ENCODE measurements at regions of chr17 and their contacts with region 1.

Region 1: DNA sequence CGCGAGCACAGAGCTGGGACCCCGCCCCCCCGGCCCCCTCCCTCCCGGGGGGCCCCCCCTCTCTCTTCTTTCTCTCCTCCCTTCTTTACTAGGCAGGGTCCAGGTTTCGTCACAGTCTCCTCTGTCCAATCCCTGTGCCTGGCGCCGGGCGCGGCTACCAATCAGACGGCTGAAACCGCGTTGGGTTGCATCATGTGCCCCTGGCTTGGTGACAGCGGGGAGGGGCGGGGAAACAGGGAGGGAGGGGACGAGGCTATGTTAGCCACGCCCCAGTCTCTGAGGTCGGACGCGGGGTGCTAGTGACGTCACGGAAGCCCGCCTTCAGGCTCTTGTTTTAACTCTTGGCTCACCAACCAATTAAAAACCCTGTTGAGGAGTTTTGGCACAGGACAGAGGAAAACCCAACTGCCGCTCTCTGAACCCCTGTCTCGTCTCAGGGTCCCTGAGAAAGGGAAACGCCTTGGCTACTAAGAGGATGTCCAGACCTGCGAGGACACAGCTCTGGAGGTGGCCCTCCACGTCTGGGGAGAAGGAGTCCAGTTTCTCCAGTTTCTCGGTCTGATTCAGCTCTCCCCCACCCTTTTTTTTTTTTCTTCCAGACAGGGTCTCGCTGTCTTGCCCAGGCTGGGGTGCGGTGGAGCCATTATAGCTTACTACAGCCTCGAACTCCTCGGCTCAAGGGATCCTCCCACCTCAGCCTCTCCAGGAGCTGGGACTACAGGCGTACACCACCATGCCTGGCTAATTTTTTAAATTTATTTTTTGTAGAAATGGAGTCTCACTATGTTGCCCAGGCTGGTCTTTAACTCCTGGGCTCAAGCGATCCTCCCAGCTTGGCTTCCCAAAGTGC is 439 bp upstream of the PLEKHH3 start:
- DNase-seq: peak; percentile 100
- ATAC-seq: peak; percentile 65 to 71 (median 68)
- H3K4me3 ChIP-seq: peak overlapping the region; percentile 96
- H3K27ac ChIP-seq: peak overlapping the region; percentile 81
- H3K4me1 ChIP-seq: peaks cover 53% of the 10 kb centered on the region
- H3K27me3 ChIP-seq: no peaks in the 10 kb centered on the region
- CTCF ChIP-seq: no peak

Region 2: DNA sequence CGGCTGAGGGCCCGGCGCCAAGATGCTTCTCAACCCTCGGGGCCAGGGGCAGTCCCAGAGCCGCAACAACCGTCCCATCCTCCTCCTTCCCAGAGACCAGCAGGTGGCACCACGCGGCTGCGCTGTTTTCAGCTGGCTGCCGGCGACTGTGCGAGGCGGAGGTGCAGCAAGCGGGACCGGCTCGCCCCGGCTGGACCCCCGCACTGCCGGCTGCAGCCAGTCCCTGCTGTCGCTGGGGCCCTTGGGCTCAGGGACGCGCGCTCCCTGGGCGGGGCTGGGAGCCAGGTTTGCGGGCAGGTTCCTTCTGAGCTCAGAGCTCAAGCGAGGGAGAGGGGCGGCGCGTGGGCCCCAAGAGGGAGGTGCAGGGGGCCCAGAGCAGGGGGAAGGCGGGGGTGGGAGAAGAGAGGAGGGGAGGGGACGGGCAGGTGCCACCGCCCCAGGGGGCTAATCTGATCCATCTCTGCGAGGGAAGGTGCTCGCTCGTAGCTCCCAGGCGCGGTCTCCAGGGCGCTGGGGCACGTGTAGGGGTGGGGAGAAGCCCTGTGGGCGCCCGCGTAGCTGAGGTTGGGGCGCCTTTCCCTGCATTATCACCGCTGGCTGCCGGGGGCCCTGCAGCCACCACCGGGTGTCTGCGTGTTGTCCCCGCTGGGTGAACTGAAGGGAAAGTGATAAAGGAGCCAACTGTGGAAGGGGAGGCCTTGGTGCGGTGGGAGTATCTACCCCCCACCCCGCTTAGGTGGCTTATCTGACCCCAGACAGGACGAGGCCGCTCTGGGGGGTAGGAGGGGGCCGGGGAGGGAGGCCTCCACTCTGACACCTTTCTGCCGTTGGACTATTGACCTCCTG is 364.7 kb before region 1 on chr17:
- intact Hi-C with region 1: loop called in 1 of 2 experiments (anchors 10 kb)
- DNase-seq: peak; percentile 89 to 94
- ATAC-seq: peak; percentile 80 to 90 (median 86)
- H3K4me3 ChIP-seq: peak overlapping the region; percentile 51
- H3K27ac ChIP-seq: peak overlapping the region; percentile 88
- H3K4me1 ChIP-seq: peaks cover 21% of the 10 kb centered on the region
- H3K27me3 ChIP-seq: no peaks in the 10 kb centered on the region
- CTCF ChIP-seq: peak; percentile 62

Region 3: DNA sequence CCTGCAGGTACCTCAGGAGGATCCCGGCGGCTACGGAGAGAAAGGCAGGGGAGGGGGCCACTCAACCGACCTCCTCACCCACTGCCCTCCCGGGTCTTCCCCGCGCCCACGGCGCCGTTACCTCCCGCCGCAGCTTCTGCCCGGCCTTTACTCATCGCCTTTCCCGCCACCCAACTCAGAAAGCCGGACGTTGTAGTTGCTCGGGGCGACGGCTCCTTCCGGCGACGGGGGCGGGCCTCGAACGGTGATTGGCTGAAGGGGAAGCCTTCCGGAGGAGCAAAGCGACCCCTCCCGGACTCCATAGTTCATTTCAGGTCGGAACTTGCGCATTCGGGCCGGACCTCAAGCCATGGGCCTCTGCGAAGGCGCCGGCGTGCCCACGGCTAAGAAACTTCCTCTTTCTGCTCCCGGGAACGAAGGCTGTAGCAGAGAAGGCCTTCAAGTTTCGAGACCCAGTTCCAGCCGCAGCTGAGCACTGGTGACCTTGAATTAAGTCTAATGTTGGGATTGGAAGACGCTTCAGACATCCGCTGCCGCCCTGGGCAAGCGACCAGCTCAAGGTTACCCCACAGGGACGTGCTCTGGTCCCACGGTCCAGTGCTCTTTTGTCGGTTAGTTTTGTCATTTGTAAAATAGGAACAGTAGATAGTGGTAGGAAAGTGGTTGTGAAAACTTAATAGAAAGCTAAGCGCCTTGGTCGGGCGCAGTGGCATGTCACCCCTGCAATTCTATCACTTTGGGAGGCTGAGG is 99.5 kb before region 1 on chr17 and contains the start of gene PSMC3IP:
- intact Hi-C with region 1: loop called (anchors 1 to 5 kb)
- DNase-seq: peak; percentile 96 to 98
- ATAC-seq: peak; percentile 95 to 98 (median 96)
- H3K4me3 ChIP-seq: peak within 1 kb of the TSS; percentile 88
- H3K27ac ChIP-seq: peak within 1 kb of the TSS; percentile 86
- H3K4me1 ChIP-seq: peaks cover 11% of the 10 kb centered on the region
- H3K27me3 ChIP-seq: no peaks in the 10 kb centered on the region
- CTCF ChIP-seq: peak; percentile 22
- total RNA-seq, gene PSMC3IP: 0.26 to 3.3 (median 1.4) TPM

Region 4: GRCh38 chr17:42618442-42619150 is 58.6 kb before region 1 on chr17:
- intact Hi-C with region 1: loop called (anchors 2 to 5 kb)
- DNase-seq: peak; percentile 76 to 91
- ATAC-seq: peak; percentile 97 to 98 (median 98)
- H3K4me3 ChIP-seq: peak overlapping the region; percentile 34
- H3K27ac ChIP-seq: peak overlapping the region; percentile 88
- H3K4me1 ChIP-seq: peaks cover 33% of the 10 kb centered on the region
- H3K27me3 ChIP-seq: no peaks in the 10 kb centered on the region
- CTCF ChIP-seq: peak; percentile 18

Region 5: DNA sequence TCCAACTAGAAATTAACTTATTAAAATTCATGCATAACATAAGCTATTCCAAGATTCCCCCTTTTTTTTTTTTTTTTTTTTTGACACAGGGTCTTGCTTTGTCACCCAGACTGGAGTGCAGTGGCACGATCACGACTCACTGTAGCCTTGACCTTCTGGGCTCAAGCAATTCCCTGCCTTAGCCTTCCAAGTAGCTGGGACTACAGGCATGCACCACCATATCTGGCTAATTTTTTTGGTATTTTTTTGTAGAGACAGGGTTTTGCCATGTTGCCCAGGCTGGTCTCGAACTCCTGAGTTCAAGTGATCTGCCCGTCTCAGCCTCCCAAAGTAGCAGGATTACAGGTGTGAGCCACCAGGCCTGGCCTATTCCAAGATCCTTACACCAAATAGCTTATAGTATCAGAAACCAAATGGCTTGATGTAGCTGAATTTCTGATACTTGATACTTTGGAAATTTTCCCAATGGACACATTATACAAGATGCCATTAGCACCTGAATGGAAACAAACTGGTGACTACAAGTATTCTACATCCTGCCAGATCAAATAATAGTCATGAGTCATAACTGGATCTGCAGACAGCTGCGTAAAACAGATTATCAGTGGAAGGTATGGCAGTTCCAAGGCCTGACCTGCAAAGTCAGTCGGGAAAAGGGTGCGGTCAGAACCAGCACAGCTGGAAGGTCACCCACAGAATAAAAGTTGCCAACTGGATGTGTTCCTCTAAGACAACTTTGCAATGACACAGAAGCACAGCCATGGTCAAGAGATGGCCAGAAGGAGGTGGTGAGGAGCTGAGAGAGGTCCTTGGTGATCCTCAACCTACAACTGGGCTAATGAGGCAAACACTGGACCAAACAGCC is 53.3 kb before region 1 on chr17:
- intact Hi-C with region 1: loop called (anchors 2 to 5 kb)
- DNase-seq: peak; percentile 23 to 68
- ATAC-seq: peak; percentile 92 to 94 (median 93)
- H3K4me3 ChIP-seq: no peak overlapping the region
- H3K27ac ChIP-seq: peak overlapping the region; percentile 66
- H3K4me1 ChIP-seq: peaks cover 11% of the 10 kb centered on the region
- H3K27me3 ChIP-seq: no peaks in the 10 kb centered on the region
- CTCF ChIP-seq: peak; percentile 7